H1 (cell line): ENCODE measurements at regions of chr1 and their contacts with region 1.

Region 1: DNA sequence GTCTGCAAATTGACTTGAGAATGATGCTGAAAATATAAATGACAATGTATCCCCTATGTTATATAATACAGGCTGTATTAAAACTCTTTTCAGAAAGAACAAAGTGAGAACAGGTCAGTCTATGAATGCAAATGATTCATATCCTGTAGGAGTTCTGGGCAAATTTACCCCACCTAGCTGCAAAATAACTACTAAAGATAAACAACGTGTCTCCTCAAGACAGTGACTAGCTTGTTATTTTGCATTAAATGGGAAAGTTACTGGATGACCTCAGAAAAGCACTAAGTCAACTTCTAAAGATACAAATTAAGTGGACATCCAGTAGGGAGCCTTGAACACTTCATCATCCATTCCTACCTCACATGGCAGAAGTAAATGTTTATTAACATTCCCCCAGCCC is 11.1 kb downstream of the RNF19B start:
- DNase-seq: no peak
- H3K4me3 ChIP-seq: no peak overlapping the region
- H3K27ac ChIP-seq: no peak overlapping the region
- H3K4me1 ChIP-seq: no peaks in the 10 kb centered on the region; a peak in 1 of 7 replicates
- H3K27me3 ChIP-seq: no peaks in the 10 kb centered on the region
- CTCF ChIP-seq: no peak
- EP300 ChIP-seq: no peak
- POLR2A ChIP-seq: no peak
- RAD21 ChIP-seq: no peak

Region 2: DNA sequence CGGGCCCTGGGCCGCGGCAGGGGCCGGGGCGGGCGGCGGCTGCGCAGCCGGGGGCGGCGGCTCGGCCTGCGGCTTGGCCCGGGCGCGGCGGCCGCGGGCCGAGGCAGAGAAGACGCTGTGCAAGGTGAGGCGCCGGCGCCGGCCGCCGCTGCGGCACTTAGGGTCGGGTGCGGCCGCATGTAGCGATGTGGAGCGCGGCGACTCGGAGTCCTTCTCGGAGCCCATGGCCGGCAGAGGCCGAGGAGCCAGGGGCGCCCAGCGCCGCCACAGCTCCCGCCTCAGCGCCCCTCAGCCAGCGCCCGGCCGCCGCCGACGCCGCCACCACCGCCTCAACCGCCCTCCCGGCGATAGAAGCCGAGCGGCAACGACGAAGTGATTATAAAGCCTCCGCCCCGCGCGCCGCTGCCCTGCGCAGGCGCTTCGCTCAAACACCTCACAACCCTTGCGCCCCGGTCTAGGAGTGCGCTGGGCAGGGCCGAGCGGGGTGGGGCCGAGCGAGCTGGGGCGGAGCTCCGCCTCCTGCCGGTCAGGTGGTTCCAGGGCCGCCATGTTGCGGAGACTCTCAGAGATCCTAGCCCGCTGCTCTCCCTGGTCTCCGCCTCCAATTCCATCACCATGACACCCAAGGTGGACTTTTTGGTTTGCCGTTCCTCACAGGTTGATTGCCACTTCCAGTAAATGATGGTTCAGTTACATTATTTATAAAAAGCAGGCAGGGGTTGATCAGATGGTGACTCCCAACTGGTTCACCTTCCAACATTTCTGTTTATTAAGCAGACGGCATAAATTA is 11.2 kb after region 1 on chr1 and contains the start of gene RNF19B:
- CTCF ChIA-PET with region 1: interaction called, 6 read pairs
- POLR2A ChIA-PET with region 1: interaction called, 19 read pairs
- DNase-seq: peak; percentile 80 to 96
- H3K4me3 ChIP-seq: peak within 1 kb of the TSS; percentile 70 to 83 (median 70)
- H3K27ac ChIP-seq: peak within 1 kb of the TSS; percentile 58; the same call in 1 of the 2 replicates
- H3K4me1 ChIP-seq: peaks cover 0 to 5% (median 1%) of the 10 kb centered on the region in 4 experiments; a peak in 3 of 7 replicates
- H3K27me3 ChIP-seq: peaks cover 0 to 6% (median 0%) of the 10 kb centered on the region in 4 experiments; a peak in 2 of 7 replicates
- CTCF ChIP-seq: no peak; a peak in 1 of 4 replicates
- EP300 ChIP-seq: no peak
- POLR2A ChIP-seq: peak; percentile 94 to 96
- RAD21 ChIP-seq: no peak
- total RNA-seq, gene RNF19B: 10.4 and 11.2 TPM in 2 replicates